ENCODE measurements at regions of chr11 and their contacts with region 1.

Region 1: GRCh38 chr11:29373725-29374124 is 643.1 kb downstream of the KCNA4 start:
- DNase-seq: no peak
- ATAC-seq: no peak
- H3K4me3 Mint-ChIP-seq: no peak overlapping the region
- H3K27ac Mint-ChIP-seq: no peak overlapping the region
- H3K4me1 Mint-ChIP-seq: peaks cover 11% of the 10 kb centered on the region
- H3K27me3 Mint-ChIP-seq: peaks cover 43% of the 10 kb centered on the region
- CTCF ChIP-seq: no peak

Region 2: GRCh38 chr11:28938091-28938490 is 435.6 kb before region 1 on chr11:
- CTCF ChIA-PET with region 1: no interaction called
- POLR2A ChIA-PET with region 1: no interaction called
- DNase-seq: no peak
- ATAC-seq: no peak
- H3K4me3 Mint-ChIP-seq: no peak overlapping the region
- H3K27ac Mint-ChIP-seq: no peak overlapping the region
- H3K4me1 Mint-ChIP-seq: peaks cover 36% of the 10 kb centered on the region
- H3K27me3 Mint-ChIP-seq: no peaks in the 10 kb centered on the region; the same call in 1 of the 2 replicates
- CTCF ChIP-seq: no peak

Region 3: DNA sequence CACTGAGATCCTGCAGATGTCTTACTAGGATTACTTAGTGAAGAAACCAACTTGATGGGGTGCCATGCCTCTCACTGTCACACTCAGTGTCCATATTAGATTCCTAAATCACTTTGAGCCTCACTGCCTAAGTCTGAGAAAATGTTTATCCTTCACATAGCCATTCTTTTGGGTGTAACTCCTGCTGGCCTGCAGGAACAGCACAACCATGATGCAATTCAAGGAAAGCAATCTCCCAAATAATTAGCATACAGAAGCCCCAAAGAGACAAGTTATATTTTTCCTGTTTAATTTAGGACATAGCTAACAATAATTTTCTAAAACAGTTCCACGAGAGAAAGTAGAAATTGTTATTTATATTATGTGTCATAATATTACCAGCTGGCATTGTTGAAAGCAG is 12.4 kb before region 1 on chr11:
- CTCF ChIA-PET with region 1: no interaction called
- POLR2A ChIA-PET with region 1: no interaction called
- DNase-seq: no peak
- ATAC-seq: no peak
- H3K4me3 Mint-ChIP-seq: no peak overlapping the region
- H3K27ac Mint-ChIP-seq: no peak overlapping the region
- H3K4me1 Mint-ChIP-seq: no peaks in the 10 kb centered on the region
- H3K27me3 Mint-ChIP-seq: peaks cover 98% of the 10 kb centered on the region
- CTCF ChIP-seq: no peak

Region 4: DNA sequence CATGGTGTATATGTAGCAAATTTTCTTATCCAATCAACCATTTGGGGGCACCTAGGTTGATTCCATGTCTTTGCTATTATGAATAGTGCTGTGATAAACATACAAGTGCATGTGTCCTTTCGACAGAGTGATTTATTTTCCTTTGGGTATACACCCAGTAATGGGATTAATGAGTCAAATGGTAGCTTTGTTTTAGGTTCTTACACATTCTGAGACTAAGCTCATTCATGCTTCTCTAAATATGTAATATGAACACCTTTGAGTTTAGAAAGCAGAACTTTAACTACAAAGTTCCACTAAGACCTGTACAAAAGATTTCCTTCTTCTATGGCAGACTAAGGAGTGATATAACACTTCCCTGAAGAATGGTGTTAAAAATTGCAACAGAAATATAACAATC is 16.1 kb after region 1 on chr11:
- CTCF ChIA-PET with region 1: no interaction called
- POLR2A ChIA-PET with region 1: interaction called, 10 read pairs
- DNase-seq: no peak
- ATAC-seq: no peak
- H3K4me3 Mint-ChIP-seq: no peak overlapping the region
- H3K27ac Mint-ChIP-seq: no peak overlapping the region
- H3K4me1 Mint-ChIP-seq: no peaks in the 10 kb centered on the region
- H3K27me3 Mint-ChIP-seq: no peaks in the 10 kb centered on the region
- CTCF ChIP-seq: no peak

Measured in WTC11 (cell line).